ENCODE measurements at regions of chr11 and their contacts with region 1.

Region 1: GRCh38 chr11:47186076-47186936 is at the start of gene PACSIN3:
- DNase-seq: peak; percentile 63
- ATAC-seq: peak; percentile 53
- H3K4me3 ChIP-seq: peak within 1 kb of the TSS; percentile 90
- H3K27ac ChIP-seq: peak within 1 kb of the TSS; percentile 81
- H3K4me1 ChIP-seq: peaks cover 22% of the 10 kb centered on the region
- H3K27me3 ChIP-seq: no peaks in the 10 kb centered on the region
- CTCF ChIP-seq: no peak
- total RNA-seq, gene PACSIN3: 83.9 and 129 TPM in 2 replicates

Region 2: DNA sequence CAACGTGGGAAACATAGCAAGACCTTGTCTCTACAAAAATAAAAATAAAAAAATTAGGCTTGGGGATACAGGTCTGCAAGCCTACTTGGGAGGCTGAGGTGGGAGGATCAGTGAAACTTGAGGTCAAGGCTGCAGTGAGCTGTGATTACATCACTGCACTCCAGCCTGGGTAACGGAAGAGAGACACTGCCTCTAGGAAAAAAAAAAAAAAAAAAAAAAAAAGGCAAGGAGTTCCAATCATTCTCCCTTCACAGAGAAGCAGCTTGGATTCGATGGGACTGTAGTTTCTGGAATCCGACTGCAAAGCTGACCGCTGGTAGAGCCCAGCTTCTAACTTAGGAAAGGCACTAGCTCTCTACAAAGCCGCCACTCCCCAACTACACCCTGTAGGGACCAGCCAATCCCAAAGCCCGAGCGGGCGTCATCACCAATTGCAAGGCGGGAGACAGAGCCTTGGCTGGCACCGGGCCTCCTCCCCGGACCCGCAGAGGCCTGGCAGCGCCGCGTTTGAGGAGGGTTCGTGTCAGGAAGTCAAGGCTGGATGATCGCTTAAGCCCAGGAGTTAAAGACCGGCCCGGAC is 27.8 kb after region 1 on chr11:
- CTCF ChIA-PET with region 1: interaction called, 17 read pairs
- POLR2A ChIA-PET with region 1: interaction called, 9 read pairs
- intact Hi-C with region 1: loop called (anchors 1 kb)
- DNase-seq: peak; percentile 91
- ATAC-seq: peak; percentile 78
- H3K4me3 ChIP-seq: peak overlapping the region; percentile 77
- H3K27ac ChIP-seq: peak overlapping the region; percentile 83
- H3K4me1 ChIP-seq: peaks cover 25% of the 10 kb centered on the region
- H3K27me3 ChIP-seq: no peaks in the 10 kb centered on the region
- CTCF ChIP-seq: no peak

Region 3: GRCh38 chr11:47220401-47220824 is 34.1 kb after region 1 on chr11:
- CTCF ChIA-PET with region 1: interaction called, 16 read pairs
- POLR2A ChIA-PET with region 1: interaction called, 9 read pairs
- intact Hi-C with region 1: no loop called
- DNase-seq: peak; percentile 70
- ATAC-seq: peak; percentile 31
- H3K4me3 ChIP-seq: no peak overlapping the region
- H3K27ac ChIP-seq: 0 out of 2 replicates have a peak overlapping the region, but pooled peaks have one; percentile 16
- H3K4me1 ChIP-seq: peaks cover 25% of the 10 kb centered on the region
- H3K27me3 ChIP-seq: no peaks in the 10 kb centered on the region
- CTCF ChIP-seq: no peak

Region 4: GRCh38 chr11:47233989-47234668 is 47.8 kb after region 1 on chr11:
- CTCF ChIA-PET with region 1: interaction called, 20 read pairs
- POLR2A ChIA-PET with region 1: no interaction called
- intact Hi-C with region 1: no loop called
- DNase-seq: peak; percentile 87
- ATAC-seq: peak; percentile 77
- H3K4me3 ChIP-seq: peak overlapping the region; percentile 63
- H3K27ac ChIP-seq: peak overlapping the region; percentile 91
- H3K4me1 ChIP-seq: peaks cover 43% of the 10 kb centered on the region
- H3K27me3 ChIP-seq: no peaks in the 10 kb centered on the region
- CTCF ChIP-seq: peak; percentile 58

Region 5: GRCh38 chr11:47248664-47249377 is 62.5 kb after region 1 on chr11 and contains the start of gene ACP2:
- CTCF ChIA-PET with region 1: interaction called, 9 read pairs
- POLR2A ChIA-PET with region 1: interaction called, 16 read pairs
- intact Hi-C with region 1: no loop called
- DNase-seq: peak; percentile 83
- ATAC-seq: peak; percentile 94
- H3K4me3 ChIP-seq: peak within 1 kb of the TSS; percentile 98
- H3K27ac ChIP-seq: peak within 1 kb of the TSS; percentile 59
- H3K4me1 ChIP-seq: peaks cover 7% of the 10 kb centered on the region; the same call in 1 of the 2 replicates
- H3K27me3 ChIP-seq: no peaks in the 10 kb centered on the region
- CTCF ChIP-seq: peak; percentile 44; the same call in 1 of the 2 replicates
- total RNA-seq, gene ACP2: 24.2 and 26.6 TPM in 2 replicates

Region 6: DNA sequence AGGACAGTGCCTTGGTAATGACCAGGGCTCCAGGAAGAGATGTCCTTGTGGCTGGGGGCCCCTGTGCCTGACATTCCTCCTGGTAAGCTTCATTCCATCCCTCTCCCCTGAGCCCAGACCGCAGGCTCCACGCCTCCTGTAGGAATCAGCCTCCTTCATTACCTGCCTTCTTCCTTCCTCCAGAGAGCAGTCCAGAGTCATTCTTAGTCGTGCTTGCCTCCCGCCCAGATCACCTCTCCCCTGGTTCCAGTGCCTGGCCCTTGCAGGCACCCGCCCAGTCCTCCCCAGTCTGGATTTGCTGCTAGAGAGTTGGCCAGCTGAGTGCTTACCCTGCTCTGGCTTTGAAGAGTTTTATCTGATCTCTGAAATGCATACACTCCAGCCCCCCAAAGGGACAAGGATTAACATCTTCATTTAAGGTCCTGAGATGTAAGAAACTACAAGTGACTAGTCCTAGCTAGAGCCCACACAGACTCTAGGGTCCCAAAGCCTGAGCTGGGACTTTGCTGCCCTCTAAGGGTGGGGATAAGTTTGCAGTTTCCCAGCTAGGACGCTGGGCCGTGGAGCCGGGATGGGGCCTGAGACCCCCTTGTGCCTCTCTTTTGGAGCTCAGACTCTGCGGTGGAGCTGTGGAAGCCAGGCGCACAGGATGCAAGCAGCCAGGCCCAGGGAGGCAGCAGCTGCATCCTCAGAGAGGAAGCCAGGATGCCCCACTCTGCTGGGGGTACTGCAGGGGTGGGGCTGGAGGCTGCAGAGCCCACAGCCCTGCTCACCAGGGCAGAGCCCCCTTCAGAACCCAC is 73.1 kb after region 1 on chr11:
- CTCF ChIA-PET with region 1: interaction called, 10 read pairs
- POLR2A ChIA-PET with region 1: no interaction called
- intact Hi-C with region 1: no loop called
- DNase-seq: peak; percentile 82
- ATAC-seq: peak; percentile 96
- H3K4me3 ChIP-seq: peak overlapping the region; percentile 26; the same call in 1 of the 2 replicates
- H3K27ac ChIP-seq: peak overlapping the region; percentile 46
- H3K4me1 ChIP-seq: peaks cover 37% of the 10 kb centered on the region
- H3K27me3 ChIP-seq: no peaks in the 10 kb centered on the region
- CTCF ChIP-seq: peak; percentile 86